Right cardiac atrium (tissue), 5 donors: ENCODE measurements at regions of chr15 and their contacts with region 1.

Region 1: DNA sequence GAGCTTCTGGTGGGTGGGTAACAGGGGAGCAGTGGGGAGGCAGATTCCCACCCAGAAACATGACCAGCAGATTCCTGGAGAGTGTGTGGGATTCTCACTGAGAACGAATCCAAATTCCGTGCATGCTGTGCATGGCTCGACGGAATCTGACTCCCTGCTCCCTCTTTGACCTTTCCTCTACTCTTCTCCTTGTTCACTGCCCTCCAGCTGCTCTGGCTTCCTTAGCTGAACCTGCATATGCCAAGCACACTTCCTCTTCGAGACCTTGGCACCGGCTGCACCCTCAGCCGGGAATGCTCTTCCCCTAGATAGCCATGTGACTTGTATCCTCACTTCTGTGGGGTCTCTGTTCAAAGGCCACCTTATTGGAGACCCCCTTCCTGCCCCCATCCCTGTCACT is 6.3 kb downstream of the INSYN1 start:
- DNase-seq: peak in 1 of 3 donors; percentile 21
- ATAC-seq: no peak
- H3K4me3 ChIP-seq: no peak overlapping the region
- H3K27ac ChIP-seq: no peak overlapping the region
- H3K4me1 ChIP-seq: peaks cover 11% of the 10 kb centered on the region
- H3K27me3 ChIP-seq: no peaks in the 10 kb centered on the region

Region 2: GRCh38 chr15:73800662-73801345 is 53.9 kb after region 1 on chr15:
- intact Hi-C with region 1: loop called in 1 of 4 experiments (anchors 10 kb)
- DNase-seq: peak; percentile 69 to 91 (median 88)
- ATAC-seq: peak; percentile 70 to 74
- H3K4me3 ChIP-seq: no peak overlapping the region
- H3K27ac ChIP-seq: peak overlapping the region; percentile 71
- H3K4me1 ChIP-seq: peaks cover 28% of the 10 kb centered on the region
- H3K27me3 ChIP-seq: no peaks in the 10 kb centered on the region